Activated CD8-positive, alpha-beta T cell treated with anti-CD3 and anti-CD28 coated beads for 36 hours (primary cell): ENCODE measurements at regions of chr2 and their contacts with region 1.

Region 1: GRCh38 chr2:225041851-225042799 is at the start of gene DOCK10:
- DNase-seq: peak; percentile 42
- ATAC-seq: peak; percentile 28
- H3K4me3 Mint-ChIP-seq: peak within 1 kb of the TSS; percentile 99
- H3K27ac Mint-ChIP-seq: peak within 1 kb of the TSS; percentile 99
- H3K4me1 Mint-ChIP-seq: peaks cover 49% of the 10 kb centered on the region
- H3K27me3 Mint-ChIP-seq: no peaks in the 10 kb centered on the region
- CTCF ChIP-seq: no peak
- total RNA-seq, gene DOCK10: 191 to 198 TPM

Region 2: GRCh38 chr2:224479826-224480225 is 562.3 kb before region 1 on chr2:
- CTCF ChIA-PET with region 1: no interaction called
- POLR2A ChIA-PET with region 1: no interaction called
- intact Hi-C with region 1: no loop called
- DNase-seq: no peak
- ATAC-seq: no peak
- H3K4me3 Mint-ChIP-seq: no peak overlapping the region
- H3K27ac Mint-ChIP-seq: peak overlapping the region; percentile 28
- H3K4me1 Mint-ChIP-seq: no peaks in the 10 kb centered on the region
- H3K27me3 Mint-ChIP-seq: no peaks in the 10 kb centered on the region
- CTCF ChIP-seq: no peak

Region 3: DNA sequence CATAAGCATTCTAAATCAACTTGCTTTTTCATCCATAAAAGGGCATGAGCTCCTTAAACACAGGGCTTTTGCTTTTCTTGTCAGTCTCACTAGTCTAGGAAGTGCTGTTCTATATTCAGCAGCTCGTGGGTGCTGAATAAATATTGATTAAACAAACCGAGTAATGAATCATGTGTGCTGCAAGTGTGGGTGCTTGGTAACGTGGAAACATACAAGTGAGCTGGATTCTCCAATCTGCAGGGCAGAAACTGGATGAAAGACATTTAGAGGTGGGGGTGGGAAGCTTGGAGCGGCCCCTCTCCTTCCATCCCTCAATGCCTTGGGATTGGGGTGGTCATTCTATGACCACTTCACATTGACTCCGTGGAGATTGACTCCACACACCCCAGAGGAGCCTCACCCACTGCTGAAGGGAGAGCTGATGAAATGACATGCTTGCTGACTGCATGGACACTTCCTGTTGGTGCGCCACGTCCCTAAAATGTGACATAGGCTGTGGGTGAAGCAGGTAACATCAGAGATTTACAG is 114.4 kb before region 1 on chr2:
- CTCF ChIA-PET with region 1: interaction called, 12 read pairs
- POLR2A ChIA-PET with region 1: interaction called, 50 read pairs
- intact Hi-C with region 1: loop called (anchors 1 kb)
- DNase-seq: peak; percentile 88
- ATAC-seq: peak; percentile 64
- H3K4me3 Mint-ChIP-seq: peak overlapping the region; percentile 42
- H3K27ac Mint-ChIP-seq: peak overlapping the region; percentile 94
- H3K4me1 Mint-ChIP-seq: peaks cover 95% of the 10 kb centered on the region
- H3K27me3 Mint-ChIP-seq: no peaks in the 10 kb centered on the region
- CTCF ChIP-seq: no peak

Region 4: GRCh38 chr2:224946895-224947294 is 95.2 kb before region 1 on chr2:
- CTCF ChIA-PET with region 1: interaction called, 4 read pairs
- POLR2A ChIA-PET with region 1: interaction called, 44 read pairs
- intact Hi-C with region 1: no loop called
- DNase-seq: no peak
- ATAC-seq: peak; percentile 50
- H3K4me3 Mint-ChIP-seq: peak overlapping the region; percentile 78
- H3K27ac Mint-ChIP-seq: peak overlapping the region; percentile 90
- H3K4me1 Mint-ChIP-seq: peaks cover 59% of the 10 kb centered on the region
- H3K27me3 Mint-ChIP-seq: no peaks in the 10 kb centered on the region
- CTCF ChIP-seq: no peak

Region 5: DNA sequence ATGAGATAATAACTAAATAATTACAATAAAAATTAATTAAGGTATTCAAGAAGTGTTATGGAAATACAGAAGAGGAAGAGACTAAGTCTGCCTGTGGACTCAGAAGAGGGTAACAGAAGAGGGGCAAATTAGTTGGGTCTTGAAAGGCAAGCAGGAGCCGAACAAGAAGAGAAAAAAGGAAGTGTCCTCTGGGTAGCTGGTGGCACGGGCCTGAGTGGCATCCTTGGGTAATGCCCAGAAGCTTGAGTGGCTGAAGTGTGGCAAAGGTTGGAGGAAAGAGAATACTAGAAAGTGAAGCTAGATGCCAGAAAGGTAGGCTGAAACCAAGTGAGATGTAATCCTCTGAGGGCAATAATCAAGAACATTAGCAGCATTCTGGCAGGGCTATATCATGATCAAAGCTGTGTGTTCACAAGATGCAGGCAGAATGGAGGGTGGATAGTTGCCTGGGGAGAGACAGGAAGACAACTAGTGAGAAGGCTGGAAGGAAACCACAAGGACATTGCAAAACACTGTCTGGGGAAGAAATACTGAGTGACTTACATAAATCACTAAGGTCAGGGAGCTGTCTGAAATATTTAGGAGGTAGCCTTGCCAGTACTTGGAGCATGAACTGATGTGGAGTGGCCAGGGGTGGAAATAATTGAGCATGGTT is 16.1 kb before region 1 on chr2:
- CTCF ChIA-PET with region 1: interaction called, 4 read pairs
- POLR2A ChIA-PET with region 1: interaction called, 62 read pairs
- intact Hi-C with region 1: no loop called
- DNase-seq: no peak
- ATAC-seq: peak; percentile 18
- H3K4me3 Mint-ChIP-seq: no peak overlapping the region
- H3K27ac Mint-ChIP-seq: peak overlapping the region; percentile 87
- H3K4me1 Mint-ChIP-seq: peaks cover 78% of the 10 kb centered on the region
- H3K27me3 Mint-ChIP-seq: no peaks in the 10 kb centered on the region
- CTCF ChIP-seq: no peak

Region 6: DNA sequence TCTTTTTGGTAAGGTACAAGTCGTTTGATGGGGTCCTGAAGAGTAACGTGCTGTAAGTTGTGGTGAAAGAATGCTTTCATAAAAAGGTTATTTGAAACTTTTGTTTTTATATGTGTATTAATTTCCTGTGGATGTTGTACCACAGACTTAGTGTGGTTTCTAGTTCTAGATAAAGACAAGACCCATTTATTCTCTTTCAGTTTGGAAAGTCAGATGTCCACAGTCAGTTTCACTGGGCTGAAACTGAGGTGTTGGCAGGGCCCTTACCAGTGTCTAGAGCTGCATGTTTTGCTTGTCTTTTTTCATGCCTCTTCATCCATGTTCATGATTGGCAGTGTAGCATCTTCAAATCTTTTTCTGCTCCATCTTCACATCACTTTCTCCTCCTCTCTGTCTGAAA is 22.2 kb after region 1 on chr2:
- CTCF ChIA-PET with region 1: interaction called, 3 read pairs
- POLR2A ChIA-PET with region 1: interaction called, 25 read pairs
- intact Hi-C with region 1: no loop called
- DNase-seq: peak; percentile 15
- ATAC-seq: peak; percentile 68
- H3K4me3 Mint-ChIP-seq: no peak overlapping the region
- H3K27ac Mint-ChIP-seq: peak overlapping the region; percentile 85
- H3K4me1 Mint-ChIP-seq: peaks cover 48% of the 10 kb centered on the region
- H3K27me3 Mint-ChIP-seq: no peaks in the 10 kb centered on the region
- CTCF ChIP-seq: no peak

Region 7: GRCh38 chr2:225488743-225489142 is 446.6 kb after region 1 on chr2:
- CTCF ChIA-PET with region 1: no interaction called
- POLR2A ChIA-PET with region 1: no interaction called
- intact Hi-C with region 1: no loop called
- DNase-seq: no peak
- ATAC-seq: no peak
- H3K4me3 Mint-ChIP-seq: no peak overlapping the region
- H3K27ac Mint-ChIP-seq: no peak overlapping the region
- H3K4me1 Mint-ChIP-seq: no peaks in the 10 kb centered on the region
- H3K27me3 Mint-ChIP-seq: peaks cover 4% of the 10 kb centered on the region
- CTCF ChIP-seq: no peak